GM13976 (cell line): ENCODE measurements at regions of chr3 and their contacts with region 1.

Region 1: GRCh38 chr3:121545574-121546455 is at the start of gene POLQ:
- DNase-seq: peak; percentile 92
- CTCF ChIP-seq: no peak

Region 2: DNA sequence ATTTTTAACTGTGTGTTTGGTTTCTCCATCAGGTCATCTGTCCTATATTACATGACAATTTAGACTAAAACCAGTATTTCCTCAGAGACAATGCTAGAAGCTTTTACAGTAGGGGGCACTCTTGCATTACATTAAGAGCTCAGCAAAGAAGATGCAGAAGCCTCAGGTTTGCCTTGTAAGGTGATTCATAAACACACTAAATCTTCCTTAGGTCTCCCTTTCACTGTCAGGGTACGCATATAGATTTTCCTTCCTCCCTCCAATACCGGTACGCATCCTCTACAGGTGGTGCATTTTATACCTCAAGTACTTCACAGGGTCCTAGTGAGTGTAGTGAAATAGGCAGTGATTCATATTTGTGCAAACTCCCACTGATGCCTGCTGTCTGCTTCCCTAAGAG is 555.8 kb after region 1 on chr3:
- in situ Hi-C with region 1: loop called (anchors 25 kb)
- DNase-seq: peak; percentile 26
- CTCF ChIP-seq: peak; percentile 50